ENCODE measurements at regions of chr19 and their contacts with region 1.

Region 1: DNA sequence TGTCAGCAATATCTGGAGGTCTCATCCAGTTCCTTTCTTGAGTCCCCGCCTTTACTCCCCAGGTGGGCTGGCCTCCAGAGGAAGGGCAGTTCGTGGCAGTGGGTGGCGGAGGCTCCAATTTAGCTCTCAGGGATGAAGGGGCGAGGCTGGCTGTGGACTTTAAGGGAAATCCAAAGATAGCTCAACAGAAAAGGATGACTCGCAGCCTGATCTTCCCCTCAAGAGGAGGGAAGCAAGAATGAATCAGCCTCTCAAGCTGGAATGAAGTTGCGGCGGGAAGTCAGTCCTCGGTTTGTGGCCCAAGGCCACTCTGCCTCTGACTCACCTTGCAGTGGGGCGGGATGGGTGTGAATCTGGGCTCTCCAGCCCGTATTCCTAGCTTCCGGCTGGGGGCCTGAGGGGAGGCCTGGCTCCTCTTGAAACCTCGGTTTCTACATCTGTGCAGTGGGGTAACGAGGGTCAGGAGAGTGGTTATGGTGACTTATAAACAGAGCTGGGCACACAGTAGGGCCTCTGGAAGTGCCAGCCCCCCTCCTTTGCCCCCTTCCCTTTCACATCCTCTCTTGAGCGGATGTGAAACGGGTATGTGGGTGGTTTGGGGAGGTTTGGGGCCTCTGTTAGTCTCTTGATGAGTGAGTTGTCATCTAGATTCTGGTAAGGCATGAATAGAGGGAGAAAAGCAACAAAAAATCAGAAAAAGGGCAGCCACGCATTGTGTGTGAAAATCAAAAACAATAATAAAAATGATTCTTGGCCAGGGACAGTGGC is 10.5 kb upstream of the SMG9 start:
- DNase-seq: peak; percentile 81
- H3K4me3 Mint-ChIP-seq: peak overlapping the region; percentile 50
- H3K27ac Mint-ChIP-seq: peak overlapping the region; percentile 90
- H3K4me1 Mint-ChIP-seq: peaks cover 87% of the 10 kb centered on the region
- H3K27me3 Mint-ChIP-seq: no peaks in the 10 kb centered on the region

Region 2: DNA sequence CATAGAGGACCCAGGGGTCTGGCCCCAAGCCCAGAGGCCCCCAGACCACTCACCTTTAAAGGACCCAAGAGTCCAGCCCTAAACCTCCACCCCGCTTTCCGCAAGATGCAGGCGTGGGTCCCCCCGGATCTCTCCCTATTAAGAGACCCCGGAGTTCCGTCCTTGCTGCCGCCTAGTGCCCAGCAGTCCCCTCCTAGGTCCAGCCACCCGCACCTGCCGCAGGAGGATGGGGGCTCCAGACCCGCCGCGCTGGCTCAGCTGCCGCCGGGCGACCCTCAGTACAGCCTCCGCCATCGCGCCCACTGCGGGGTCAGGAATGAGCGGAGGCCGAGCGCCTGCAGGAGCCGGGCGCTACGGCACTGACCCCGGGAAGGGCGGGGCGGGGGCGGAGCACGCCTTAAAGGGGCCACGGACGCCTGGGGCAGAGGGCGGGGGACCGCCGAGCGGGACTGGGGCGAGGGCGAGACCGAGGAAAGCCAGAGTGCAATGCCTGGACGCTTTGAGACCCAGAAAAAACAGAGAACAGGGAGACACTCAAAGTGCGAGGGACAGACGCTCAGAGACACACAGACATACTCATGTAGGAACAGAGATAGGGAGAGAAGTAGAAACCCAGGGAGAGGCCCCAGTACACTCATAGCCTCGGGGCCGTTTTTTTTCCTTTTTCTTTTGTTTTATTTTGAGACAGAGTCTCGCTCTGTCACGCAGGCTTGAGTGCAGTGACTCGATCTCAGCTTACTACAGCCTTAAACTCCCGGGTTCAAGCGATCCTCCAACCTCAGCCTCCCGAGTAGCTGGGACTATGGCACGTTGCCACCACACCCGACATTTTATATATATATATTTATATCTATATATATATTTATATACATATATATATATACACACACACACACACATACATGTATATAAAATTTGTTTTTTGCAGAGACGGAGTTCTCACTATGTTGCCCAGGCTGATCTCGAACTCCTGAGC is 238.1 kb before region 1 on chr19 and contains the start of gene ETHE1:
- intact Hi-C with region 1: loop called (anchors 5 kb)
- DNase-seq: peak; percentile 79
- H3K4me3 Mint-ChIP-seq: peak within 1 kb of the TSS; percentile 79
- H3K27ac Mint-ChIP-seq: peak within 1 kb of the TSS; percentile 77
- H3K4me1 Mint-ChIP-seq: peaks cover 32% of the 10 kb centered on the region
- H3K27me3 Mint-ChIP-seq: no peaks in the 10 kb centered on the region
- total RNA-seq, gene ETHE1: 55.1 and 55.4 TPM in 2 replicates

Region 3: GRCh38 chr19:43743022-43743421 is 22.3 kb before region 1 on chr19:
- intact Hi-C with region 1: no loop called
- DNase-seq: no peak
- H3K4me3 Mint-ChIP-seq: no peak overlapping the region
- H3K27ac Mint-ChIP-seq: no peak overlapping the region
- H3K4me1 Mint-ChIP-seq: peaks cover 39% of the 10 kb centered on the region
- H3K27me3 Mint-ChIP-seq: no peaks in the 10 kb centered on the region

Region 4: DNA sequence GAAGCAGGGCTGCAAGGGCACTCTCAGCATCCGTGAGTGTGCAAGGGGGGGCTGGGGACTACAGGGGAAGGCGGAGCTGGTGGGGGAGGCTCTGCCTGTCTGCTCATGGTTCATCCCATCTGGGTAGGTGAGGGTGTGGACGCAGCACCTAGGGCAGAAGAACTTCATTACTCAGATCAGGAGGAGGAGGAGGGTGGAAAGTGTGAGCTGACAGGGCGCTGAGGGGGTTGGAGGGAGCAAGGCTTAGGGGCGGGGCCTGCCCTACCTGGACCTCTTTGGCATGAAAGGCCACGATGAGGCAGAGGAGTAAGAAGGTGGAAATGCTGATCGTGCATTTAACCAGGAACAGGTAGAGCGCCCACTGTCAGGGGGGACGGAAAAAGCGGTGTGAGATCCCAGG is 11.0 kb after region 1 on chr19:
- intact Hi-C with region 1: loop called (anchors 1 kb)
- DNase-seq: no peak
- H3K4me3 Mint-ChIP-seq: peak overlapping the region; percentile 85
- H3K27ac Mint-ChIP-seq: peak overlapping the region; percentile 83
- H3K4me1 Mint-ChIP-seq: peaks cover 57% of the 10 kb centered on the region
- H3K27me3 Mint-ChIP-seq: no peaks in the 10 kb centered on the region

Region 5: DNA sequence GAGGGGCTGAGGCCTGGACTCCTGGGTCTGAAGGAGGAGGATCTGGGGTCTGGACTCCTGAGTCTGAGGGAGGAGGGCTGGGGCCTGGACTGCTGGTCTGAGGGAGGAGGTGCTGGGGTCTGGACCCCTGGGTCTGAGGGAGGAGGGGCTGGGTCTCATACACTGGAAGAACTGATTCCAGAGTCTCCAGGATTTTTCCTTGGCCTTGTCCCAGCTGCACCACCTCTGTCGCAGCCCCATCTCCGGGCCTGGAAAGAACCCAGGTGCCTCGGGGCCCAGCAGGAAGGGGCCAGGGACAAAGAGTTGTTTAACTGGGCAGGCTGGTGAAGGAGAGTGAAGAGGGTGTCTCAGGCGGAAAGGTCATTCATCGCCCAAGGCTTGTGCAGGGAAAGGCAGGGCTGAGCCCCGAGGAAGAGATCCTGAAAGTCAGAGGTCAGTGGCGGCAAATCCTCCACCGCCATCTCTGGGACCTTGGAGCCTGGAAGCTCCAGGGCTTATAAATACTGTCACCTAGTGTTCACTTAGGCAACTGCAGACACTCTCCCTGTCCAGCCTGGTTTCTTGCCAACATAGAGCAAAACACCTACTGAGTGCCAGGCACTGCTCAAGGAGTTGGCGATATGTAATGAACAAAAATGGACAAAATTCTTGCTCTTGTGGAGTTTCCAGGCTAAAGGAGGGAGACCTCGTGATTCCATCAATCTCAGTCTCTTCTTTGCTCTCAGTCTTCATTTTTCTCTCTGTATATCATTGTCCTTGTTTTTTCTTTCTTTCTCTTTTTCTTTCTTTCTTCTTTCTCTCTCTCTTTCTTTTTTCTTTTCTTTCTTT is 19.9 kb after region 1 on chr19:
- intact Hi-C with region 1: loop called (anchors 1 kb)
- DNase-seq: peak; percentile 51
- H3K4me3 Mint-ChIP-seq: peak overlapping the region; percentile 66
- H3K27ac Mint-ChIP-seq: peak overlapping the region; percentile 92
- H3K4me1 Mint-ChIP-seq: peaks cover 41% of the 10 kb centered on the region
- H3K27me3 Mint-ChIP-seq: no peaks in the 10 kb centered on the region